CD8-positive, alpha-beta T cell (primary cell): ENCODE measurements at regions of chr6 and their contacts with region 1.

Region 1: GRCh38 chr6:56637640-56638039 is 5.0 kb downstream of the DST start:
- DNase-seq: peak in 2 of 9 experiments; percentile 6 to 23
- ATAC-seq: no peak
- H3K4me3 ChIP-seq: no peak overlapping the region
- H3K4me3 Mint-ChIP-seq: no peak overlapping the region
- H3K27ac ChIP-seq: no peak overlapping the region
- H3K27ac Mint-ChIP-seq: no peak overlapping the region
- H3K4me1 ChIP-seq: no peaks in the 10 kb centered on the region
- H3K4me1 Mint-ChIP-seq: no peaks in the 10 kb centered on the region
- H3K27me3 ChIP-seq: no peaks in the 10 kb centered on the region
- H3K27me3 Mint-ChIP-seq: no peaks in the 10 kb centered on the region
- CTCF ChIP-seq: no peak

Region 2: DNA sequence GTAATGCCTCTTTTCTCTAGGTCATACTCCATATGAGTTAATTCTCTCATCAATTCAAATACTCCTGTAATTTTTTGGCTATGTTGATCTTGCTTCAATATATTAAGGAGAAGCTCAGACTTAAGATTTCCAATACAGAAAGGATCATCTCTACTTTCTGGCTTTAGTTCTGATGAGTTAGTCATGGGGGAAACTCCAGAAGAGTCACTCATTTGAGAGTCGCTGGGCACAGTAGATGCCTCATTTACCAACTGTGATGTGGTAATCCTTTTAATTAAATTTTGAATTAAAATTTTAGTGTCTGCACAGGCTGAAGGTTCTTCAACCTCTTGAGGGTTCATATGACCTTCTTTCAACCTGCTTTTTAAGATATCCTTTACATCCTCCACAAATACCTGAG is 33.5 kb before region 1 on chr6:
- CTCF ChIA-PET with region 1: no interaction called
- POLR2A ChIA-PET with region 1: no interaction called
- intact Hi-C with region 1: loop called in 1 of 2 experiments (anchors 1 kb)
- DNase-seq: no peak
- ATAC-seq: no peak
- H3K4me3 ChIP-seq: no peak overlapping the region
- H3K4me3 Mint-ChIP-seq: no peak overlapping the region
- H3K27ac ChIP-seq: no peak overlapping the region
- H3K27ac Mint-ChIP-seq: no peak overlapping the region
- H3K4me1 ChIP-seq: no peaks in the 10 kb centered on the region
- H3K4me1 Mint-ChIP-seq: no peaks in the 10 kb centered on the region
- H3K27me3 ChIP-seq: no peaks in the 10 kb centered on the region
- H3K27me3 Mint-ChIP-seq: no peaks in the 10 kb centered on the region
- CTCF ChIP-seq: no peak

Region 3: GRCh38 chr6:56618050-56618449 is 19.6 kb before region 1 on chr6:
- CTCF ChIA-PET with region 1: no interaction called
- POLR2A ChIA-PET with region 1: no interaction called
- intact Hi-C with region 1: no loop called
- DNase-seq: no peak
- ATAC-seq: no peak
- H3K4me3 ChIP-seq: no peak overlapping the region
- H3K4me3 Mint-ChIP-seq: no peak overlapping the region
- H3K27ac ChIP-seq: no peak overlapping the region
- H3K27ac Mint-ChIP-seq: no peak overlapping the region
- H3K4me1 ChIP-seq: no peaks in the 10 kb centered on the region
- H3K4me1 Mint-ChIP-seq: no peaks in the 10 kb centered on the region
- H3K27me3 ChIP-seq: no peaks in the 10 kb centered on the region
- H3K27me3 Mint-ChIP-seq: no peaks in the 10 kb centered on the region
- CTCF ChIP-seq: no peak